Activated CD4-positive, alpha-beta memory T cell treated with anti-CD3 and anti-CD28 coated beads for 36 hours (primary cell): ENCODE measurements at regions of chr7 and their contacts with region 1.

Region 1: GRCh38 chr7:105429746-105430612 is 41.3 kb upstream of the SRPK2 start:
- DNase-seq: peak; percentile 57
- H3K4me3 Mint-ChIP-seq: no peak overlapping the region
- H3K27ac Mint-ChIP-seq: no peak overlapping the region
- H3K4me1 Mint-ChIP-seq: peaks cover 19% of the 10 kb centered on the region
- H3K27me3 Mint-ChIP-seq: no peaks in the 10 kb centered on the region

Region 2: DNA sequence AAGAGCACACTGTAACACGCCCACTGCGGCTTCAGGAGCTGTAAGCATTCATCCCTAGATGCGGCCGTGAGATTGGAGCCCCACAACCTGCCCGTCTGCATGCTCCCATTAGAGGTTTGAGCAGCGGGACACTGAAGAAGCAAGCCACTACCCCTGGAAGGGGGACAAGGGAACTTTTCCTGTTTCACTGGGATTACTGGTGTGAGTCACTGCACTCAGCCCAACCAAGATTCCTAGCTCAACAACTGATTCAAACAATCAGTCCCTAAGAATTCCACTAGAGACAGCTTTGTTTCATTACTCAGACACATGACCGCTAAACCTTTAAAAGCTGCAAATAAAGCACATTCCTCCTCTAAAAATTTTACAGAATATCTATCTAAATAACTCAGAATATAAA is 1292.0 kb before region 1 on chr7:
- CTCF ChIA-PET with region 1: no interaction called
- POLR2A ChIA-PET with region 1: interaction called, 10 read pairs
- intact Hi-C with region 1: no loop called
- DNase-seq: no peak
- H3K4me3 Mint-ChIP-seq: no peak overlapping the region
- H3K27ac Mint-ChIP-seq: no peak overlapping the region
- H3K4me1 Mint-ChIP-seq: peaks cover 9% of the 10 kb centered on the region
- H3K27me3 Mint-ChIP-seq: no peaks in the 10 kb centered on the region

Region 3: GRCh38 chr7:104627516-104627915 is 802.5 kb before region 1 on chr7:
- CTCF ChIA-PET with region 1: no interaction called
- POLR2A ChIA-PET with region 1: no interaction called
- intact Hi-C with region 1: no loop called
- DNase-seq: peak; percentile 17
- H3K4me3 Mint-ChIP-seq: no peak overlapping the region
- H3K27ac Mint-ChIP-seq: no peak overlapping the region
- H3K4me1 Mint-ChIP-seq: no peaks in the 10 kb centered on the region
- H3K27me3 Mint-ChIP-seq: peaks cover 6% of the 10 kb centered on the region

Region 4: GRCh38 chr7:105149827-105150226 is 280.2 kb before region 1 on chr7:
- CTCF ChIA-PET with region 1: interaction called, 4 read pairs
- POLR2A ChIA-PET with region 1: no interaction called
- intact Hi-C with region 1: loop called (anchors 1 kb)
- DNase-seq: no peak
- H3K4me3 Mint-ChIP-seq: no peak overlapping the region
- H3K27ac Mint-ChIP-seq: peak overlapping the region; percentile 14
- H3K4me1 Mint-ChIP-seq: peaks cover 26% of the 10 kb centered on the region
- H3K27me3 Mint-ChIP-seq: no peaks in the 10 kb centered on the region

Region 5: DNA sequence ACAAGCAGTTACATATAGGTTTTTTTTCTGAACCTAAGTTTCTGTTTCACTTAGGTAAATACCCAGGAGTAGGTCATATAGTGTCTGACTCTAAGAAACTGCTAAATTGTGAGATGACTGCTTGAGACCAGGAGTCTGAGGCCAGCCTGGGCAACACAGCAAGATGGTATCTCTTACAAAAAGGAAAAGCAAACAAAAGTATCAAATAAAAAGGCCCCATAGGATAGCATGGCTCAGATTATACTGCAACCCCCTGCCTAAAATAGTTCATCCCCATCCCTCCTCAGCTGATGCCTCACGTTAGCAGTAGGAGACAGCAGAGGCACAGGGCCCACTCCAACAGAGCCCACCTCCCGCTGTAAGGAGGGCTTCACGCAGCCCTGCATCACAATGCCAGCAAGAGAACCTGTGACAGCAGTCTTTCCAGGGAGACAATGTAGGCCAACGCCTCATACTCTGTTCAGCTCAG is 131.5 kb before region 1 on chr7:
- CTCF ChIA-PET with region 1: no interaction called
- POLR2A ChIA-PET with region 1: no interaction called
- intact Hi-C with region 1: loop called (anchors 2 kb)
- DNase-seq: peak; percentile 69
- H3K4me3 Mint-ChIP-seq: peak overlapping the region; percentile 47
- H3K27ac Mint-ChIP-seq: peak overlapping the region; percentile 93
- H3K4me1 Mint-ChIP-seq: peaks cover 59% of the 10 kb centered on the region
- H3K27me3 Mint-ChIP-seq: no peaks in the 10 kb centered on the region

Region 6: DNA sequence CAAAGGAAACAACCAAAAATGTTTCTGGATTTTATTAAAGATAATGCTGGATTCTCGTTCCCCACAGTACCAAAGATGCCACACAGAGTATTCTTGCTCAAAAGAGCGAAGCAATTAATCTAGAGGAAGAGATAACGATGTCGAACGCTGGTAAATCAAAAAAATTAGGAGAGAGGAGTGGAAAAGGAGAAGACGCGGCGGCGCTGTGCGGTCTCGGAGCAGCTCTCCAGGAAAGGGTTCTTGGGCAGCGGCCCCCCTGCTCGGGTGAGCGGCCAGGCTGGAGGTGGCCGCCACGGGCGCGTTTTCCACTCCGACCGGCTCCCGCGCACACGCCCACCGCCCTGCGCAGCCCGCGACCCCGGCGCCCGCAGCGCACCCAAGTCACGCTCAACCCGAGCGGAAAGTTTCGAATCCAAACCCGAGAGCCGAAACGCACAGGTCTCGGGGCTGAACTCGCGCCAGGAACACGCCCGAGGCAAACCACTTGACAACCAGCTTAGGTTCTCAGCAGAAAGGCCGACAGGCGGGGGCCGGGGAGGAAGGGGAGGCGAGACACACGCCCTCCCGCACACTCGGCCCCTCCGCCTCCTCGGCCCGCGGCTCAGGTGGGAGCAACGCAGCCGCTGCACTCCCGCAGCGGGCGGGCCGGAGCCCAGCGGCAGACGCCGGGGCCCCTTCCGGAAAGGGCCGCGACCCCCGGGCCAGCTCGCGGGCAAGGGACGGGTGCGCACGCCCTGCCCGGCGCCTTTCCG is 42.2 kb before region 1 on chr7:
- CTCF ChIA-PET with region 1: interaction called, 3 read pairs
- POLR2A ChIA-PET with region 1: no interaction called
- intact Hi-C with region 1: loop called (anchors 5 kb)
- DNase-seq: peak; percentile 61
- H3K4me3 Mint-ChIP-seq: peak overlapping the region; percentile 81
- H3K27ac Mint-ChIP-seq: peak overlapping the region; percentile 59
- H3K4me1 Mint-ChIP-seq: peaks cover 32% of the 10 kb centered on the region
- H3K27me3 Mint-ChIP-seq: no peaks in the 10 kb centered on the region

Region 7: DNA sequence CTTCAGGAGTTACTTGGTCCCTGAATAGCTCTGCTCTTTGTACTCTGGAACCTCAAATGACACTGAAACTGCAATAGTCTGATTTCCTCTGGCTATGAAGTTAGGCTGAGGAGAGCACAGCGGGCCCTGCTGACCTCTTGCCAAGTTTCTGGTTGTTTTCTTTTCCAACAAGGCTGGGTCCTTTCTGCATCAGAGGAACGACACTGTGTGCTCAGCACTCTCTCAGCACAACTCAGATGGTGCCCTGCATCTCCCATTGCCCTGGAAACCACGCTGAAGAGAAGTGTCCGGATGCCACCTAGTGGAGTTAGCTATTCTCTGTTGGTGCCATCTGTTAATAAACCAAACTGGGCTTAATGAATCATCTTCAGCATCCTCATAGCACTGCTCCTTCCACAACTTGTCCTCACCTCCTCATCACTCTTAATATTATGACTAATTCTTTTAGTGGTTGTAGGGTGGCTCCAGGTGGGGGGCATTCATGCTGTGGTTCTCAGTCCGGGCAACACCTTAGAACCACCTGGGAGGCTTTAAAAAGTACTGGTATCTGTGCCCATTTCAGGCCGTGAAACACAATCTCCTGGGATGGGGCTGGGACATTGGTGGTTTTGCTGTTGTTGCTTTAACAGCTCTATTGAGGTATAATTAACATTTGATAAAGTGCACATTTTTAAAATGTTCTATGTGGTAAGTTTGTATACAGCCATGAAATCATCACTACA is 159.5 kb after region 1 on chr7:
- CTCF ChIA-PET with region 1: no interaction called
- POLR2A ChIA-PET with region 1: no interaction called
- intact Hi-C with region 1: loop called (anchors 1 kb)
- DNase-seq: peak; percentile 75
- H3K4me3 Mint-ChIP-seq: no peak overlapping the region
- H3K27ac Mint-ChIP-seq: no peak overlapping the region
- H3K4me1 Mint-ChIP-seq: peaks cover 5% of the 10 kb centered on the region
- H3K27me3 Mint-ChIP-seq: no peaks in the 10 kb centered on the region

Region 8: DNA sequence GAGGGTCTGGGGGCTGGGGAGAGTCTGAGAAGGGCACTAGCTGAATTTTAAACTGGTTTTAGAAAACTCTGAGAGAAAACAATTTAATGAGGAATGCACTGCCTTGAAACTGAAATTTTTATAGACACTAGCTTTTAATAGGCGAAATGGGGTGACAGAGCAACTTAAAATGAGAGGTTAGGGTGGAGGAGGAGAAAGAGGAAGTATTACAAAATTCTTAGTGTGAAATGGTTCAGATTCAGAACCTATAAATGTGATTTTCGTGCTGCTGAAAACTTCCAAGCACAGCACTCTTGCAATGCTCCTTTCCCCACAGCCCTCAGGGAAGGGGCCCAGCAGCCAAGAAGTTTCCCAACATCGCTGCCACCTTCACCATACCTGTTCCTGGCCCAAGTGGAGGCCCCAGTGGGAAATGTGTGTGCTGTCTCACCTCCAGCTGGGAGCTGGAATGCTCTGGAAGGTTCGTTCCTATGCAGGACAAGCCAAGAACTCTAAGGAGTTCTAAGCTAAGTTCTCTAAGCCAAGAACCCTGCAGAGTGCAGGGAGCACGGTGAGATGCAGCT is 386.4 kb after region 1 on chr7:
- CTCF ChIA-PET with region 1: no interaction called
- POLR2A ChIA-PET with region 1: no interaction called
- intact Hi-C with region 1: no loop called
- DNase-seq: no peak
- H3K4me3 Mint-ChIP-seq: no peak overlapping the region
- H3K27ac Mint-ChIP-seq: no peak overlapping the region
- H3K4me1 Mint-ChIP-seq: peaks cover 4% of the 10 kb centered on the region
- H3K27me3 Mint-ChIP-seq: no peaks in the 10 kb centered on the region